ENCODE measurements at regions of chr5 and their contacts with region 1.

Region 1: GRCh38 chr5:112757468-112758208 is 20.0 kb downstream of the APC start:
- DNase-seq: no peak
- H3K4me3 ChIP-seq: no peak overlapping the region
- H3K27ac ChIP-seq: no peak overlapping the region
- H3K27me3 ChIP-seq: no peaks in the 10 kb centered on the region
- CTCF ChIP-seq: peak; percentile 74

Region 2: DNA sequence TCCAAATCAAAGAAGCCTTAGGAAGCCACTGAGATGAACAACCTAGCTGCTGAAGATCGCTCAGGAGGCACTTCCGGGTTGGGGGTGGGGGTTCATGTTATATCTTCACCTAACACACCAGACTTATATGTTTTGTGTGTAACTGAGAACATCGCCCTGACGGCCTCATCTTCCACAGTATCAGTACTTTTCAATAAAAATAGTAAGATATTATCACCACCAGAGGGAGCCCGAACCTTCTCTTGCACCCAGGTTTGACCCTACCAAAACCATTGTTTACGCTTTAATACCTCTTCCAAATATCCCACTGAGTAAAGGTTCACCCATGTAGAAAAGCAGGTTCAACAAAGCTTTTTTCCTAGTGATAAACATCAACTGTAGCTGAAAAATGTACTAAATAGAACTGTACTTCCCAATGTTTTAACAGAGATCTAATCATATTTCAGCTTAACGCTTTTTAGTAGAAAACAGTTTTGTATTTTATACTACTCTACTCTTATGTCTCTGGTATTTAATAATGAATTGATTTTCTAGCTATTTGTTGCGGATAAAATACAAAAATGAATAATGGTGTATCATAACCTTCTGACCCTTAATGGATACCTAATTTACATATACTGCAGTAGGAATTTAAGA is 582.6 kb before region 1 on chr5:
- CTCF ChIA-PET with region 1: interaction called, 11 read pairs
- POLR2A ChIA-PET with region 1: no interaction called
- DNase-seq: no peak
- H3K4me3 ChIP-seq: no peak overlapping the region
- H3K27ac ChIP-seq: no peak overlapping the region
- H3K27me3 ChIP-seq: no peaks in the 10 kb centered on the region
- CTCF ChIP-seq: peak; percentile 68

Region 3: GRCh38 chr5:112684737-112685136 is 72.9 kb before region 1 on chr5:
- CTCF ChIA-PET with region 1: interaction called, 68 read pairs
- POLR2A ChIA-PET with region 1: no interaction called
- DNase-seq: no peak
- H3K4me3 ChIP-seq: no peak overlapping the region
- H3K27ac ChIP-seq: no peak overlapping the region
- H3K27me3 ChIP-seq: no peaks in the 10 kb centered on the region
- CTCF ChIP-seq: no peak

Region 4: GRCh38 chr5:112737463-112738190 is 20.0 kb before region 1 on chr5 and contains the start of gene APC:
- CTCF ChIA-PET with region 1: interaction called, 25 read pairs
- POLR2A ChIA-PET with region 1: no interaction called
- DNase-seq: peak; percentile 66
- H3K4me3 ChIP-seq: peak within 1 kb of the TSS; percentile 94
- H3K27ac ChIP-seq: no peak within 1 kb of the TSS
- H3K27me3 ChIP-seq: no peaks in the 10 kb centered on the region
- CTCF ChIP-seq: no peak
- polyA plus RNA-seq, gene APC: 16.0 and 25.7 TPM in 2 replicates

Region 5: GRCh38 chr5:112779531-112779930 is 21.9 kb after region 1 on chr5:
- CTCF ChIA-PET with region 1: interaction called, 20 read pairs
- POLR2A ChIA-PET with region 1: no interaction called
- DNase-seq: no peak
- H3K4me3 ChIP-seq: no peak overlapping the region
- H3K27ac ChIP-seq: no peak overlapping the region
- H3K27me3 ChIP-seq: no peaks in the 10 kb centered on the region
- CTCF ChIP-seq: no peak

Measured in AG04450 (cell line).